Panc1 (cell line): ENCODE measurements at regions of chr2 and their contacts with region 1.

Region 1: GRCh38 chr2:184178229-184178628 is 420.1 kb upstream of the ZNF804A start:
- DNase-seq: no peak
- ATAC-seq: no peak
- H3K4me3 ChIP-seq: no peak overlapping the region
- H3K27ac ChIP-seq: no peak overlapping the region
- H3K4me1 ChIP-seq: no peaks in the 10 kb centered on the region
- H3K27me3 ChIP-seq: no peaks in the 10 kb centered on the region
- CTCF ChIP-seq: no peak

Region 2: DNA sequence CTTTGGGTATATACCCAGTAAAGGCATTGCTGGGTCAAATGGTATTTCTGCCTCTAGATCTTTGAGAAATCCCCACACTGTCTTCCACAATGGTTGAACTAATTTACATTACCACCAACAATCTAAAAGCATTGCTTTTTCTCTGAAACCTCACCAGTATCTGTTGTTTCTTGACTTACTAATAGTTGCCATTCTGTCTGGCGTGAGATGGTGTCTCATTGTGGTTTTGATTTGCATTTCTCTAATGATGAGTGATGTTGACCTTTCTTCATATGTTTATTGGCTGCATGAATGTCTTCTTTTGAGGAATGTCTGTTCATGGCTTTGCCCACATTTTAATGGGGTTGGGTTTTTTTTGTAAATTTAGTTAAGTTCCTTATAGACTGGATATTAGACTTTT is 37.5 kb after region 1 on chr2:
- CTCF ChIA-PET with region 1: interaction called, 6 read pairs
- POLR2A ChIA-PET with region 1: interaction called, 11 read pairs
- in situ Hi-C with region 1: no loop called
- intact Hi-C with region 1: no loop called
- DNase-seq: no peak
- ATAC-seq: no peak
- H3K4me3 ChIP-seq: no peak overlapping the region
- H3K27ac ChIP-seq: no peak overlapping the region
- H3K4me1 ChIP-seq: no peaks in the 10 kb centered on the region
- H3K27me3 ChIP-seq: no peaks in the 10 kb centered on the region
- CTCF ChIP-seq: no peak

Region 3: GRCh38 chr2:184261818-184262217 is 83.6 kb after region 1 on chr2:
- CTCF ChIA-PET with region 1: no interaction called
- POLR2A ChIA-PET with region 1: no interaction called
- in situ Hi-C with region 1: no loop called
- intact Hi-C with region 1: no loop called
- DNase-seq: no peak
- ATAC-seq: no peak
- H3K4me3 ChIP-seq: no peak overlapping the region
- H3K27ac ChIP-seq: no peak overlapping the region
- H3K4me1 ChIP-seq: no peaks in the 10 kb centered on the region
- H3K27me3 ChIP-seq: no peaks in the 10 kb centered on the region
- CTCF ChIP-seq: no peak